K562 (cell line): ENCODE measurements at regions of chr9 and their contacts with region 1.

Region 1: DNA sequence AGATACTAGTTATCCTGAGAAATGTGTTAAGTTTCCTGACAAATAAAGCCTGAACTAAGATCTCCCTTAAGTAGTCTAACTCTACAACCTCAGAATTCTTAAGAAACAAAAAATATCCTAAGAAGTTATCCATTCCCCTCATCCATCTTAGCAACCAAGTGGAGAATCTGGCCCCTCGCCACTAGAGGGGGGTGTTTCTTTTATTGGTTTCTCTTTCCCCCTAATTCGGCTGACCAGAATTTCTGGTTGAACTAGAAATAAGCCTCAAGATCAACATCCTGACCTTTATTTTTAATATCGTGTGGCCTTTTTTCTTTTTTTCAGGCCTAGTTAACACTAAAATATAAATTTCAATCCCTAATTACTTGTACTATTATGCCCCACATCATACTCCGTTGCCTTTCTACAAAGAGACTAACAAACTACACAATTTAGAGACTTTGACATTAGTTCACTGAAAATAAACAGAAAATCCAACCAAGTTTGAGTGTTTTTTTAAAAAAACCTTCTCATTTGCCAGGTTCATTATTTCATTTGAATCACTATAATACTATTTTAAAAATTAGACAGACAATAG is 14.3 kb upstream of the NR4A3 start:
- DNase-seq: peak; percentile 67 to 79 (median 72)
- ATAC-seq: peak; percentile 92
- H3K4me3 ChIP-seq: no peak overlapping the region
- H3K27ac ChIP-seq: no peak overlapping the region
- H3K4me1 ChIP-seq: peaks cover 0 to 9% of the 10 kb centered on the region in 2 experiments; a peak in 2 of 5 replicates
- H3K27me3 ChIP-seq: no peaks in the 10 kb centered on the region
- CTCF ChIP-seq: peak; percentile 69 to 85 (median 78)
- EP300 ChIP-seq: no peak
- POLR2A ChIP-seq: no peak
- RAD21 ChIP-seq: peak; percentile 68 to 78

Region 2: DNA sequence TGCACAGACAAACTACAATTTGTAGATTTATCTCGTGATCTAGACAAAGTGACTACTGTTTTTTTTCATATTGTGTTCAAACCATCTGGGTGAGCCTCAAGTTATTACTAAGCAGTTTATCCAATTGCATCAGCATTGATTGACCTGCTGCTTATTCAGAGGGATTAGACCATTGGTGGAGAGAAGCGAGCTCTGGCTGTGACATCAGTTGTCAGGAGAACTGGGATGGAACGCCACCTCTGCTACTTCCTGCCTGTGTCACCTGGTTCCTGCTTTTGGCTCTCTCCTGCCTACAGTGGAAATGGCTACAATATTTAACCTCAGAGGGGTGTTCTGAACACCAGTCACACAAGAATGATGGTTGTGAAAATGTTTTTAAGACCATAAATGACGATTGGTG is 26.4 kb after region 1 on chr9:
- CTCF ChIA-PET with region 1: no interaction called
- POLR2A ChIA-PET with region 1: no interaction called
- in situ Hi-C with region 1: no loop called
- intact Hi-C with region 1: no loop called
- DNase-seq: no peak
- ATAC-seq: peak; percentile 74
- H3K4me3 ChIP-seq: no peak overlapping the region
- H3K27ac ChIP-seq: no peak overlapping the region
- H3K4me1 ChIP-seq: peaks cover 0 to 2% of the 10 kb centered on the region in 2 experiments; a peak in 1 of 5 replicates
- H3K27me3 ChIP-seq: peaks cover 11 to 12% of the 10 kb centered on the region in 2 experiments
- CTCF ChIP-seq: no peak
- EP300 ChIP-seq: no peak
- POLR2A ChIP-seq: no peak
- RAD21 ChIP-seq: no peak

Region 3: GRCh38 chr9:99999797-100000196 is 192.4 kb after region 1 on chr9:
- CTCF ChIA-PET with region 1: no interaction called
- POLR2A ChIA-PET with region 1: no interaction called
- in situ Hi-C with region 1: loop called (anchors 10 kb)
- intact Hi-C with region 1: no loop called
- DNase-seq: no peak
- ATAC-seq: no peak
- H3K4me3 ChIP-seq: no peak overlapping the region
- H3K27ac ChIP-seq: no peak overlapping the region
- H3K4me1 ChIP-seq: no peaks in the 10 kb centered on the region
- H3K27me3 ChIP-seq: no peaks in the 10 kb centered on the region
- CTCF ChIP-seq: no peak
- EP300 ChIP-seq: no peak
- POLR2A ChIP-seq: no peak
- RAD21 ChIP-seq: no peak

Region 4: GRCh38 chr9:100011062-100011681 is 203.8 kb after region 1 on chr9:
- CTCF ChIA-PET with region 1: interaction called, 18 read pairs
- POLR2A ChIA-PET with region 1: no interaction called
- in situ Hi-C with region 1: loop called (anchors 10 kb)
- intact Hi-C with region 1: loop called (anchors 1 kb)
- DNase-seq: peak; percentile 48 to 74 (median 59)
- ATAC-seq: peak; percentile 77; the same call in 2 of the 3 replicates
- H3K4me3 ChIP-seq: no peak overlapping the region
- H3K27ac ChIP-seq: no peak overlapping the region
- H3K4me1 ChIP-seq: no peaks in the 10 kb centered on the region
- H3K27me3 ChIP-seq: no peaks in the 10 kb centered on the region
- CTCF ChIP-seq: peak; percentile 49 to 79 (median 55); a peak in 5 of 6 replicates
- EP300 ChIP-seq: no peak
- POLR2A ChIP-seq: no peak
- RAD21 ChIP-seq: peak; percentile 83 to 90

Region 5: GRCh38 chr9:100222674-100223073 is 415.3 kb after region 1 on chr9:
- CTCF ChIA-PET with region 1: interaction called, 10 read pairs
- POLR2A ChIA-PET with region 1: no interaction called
- in situ Hi-C with region 1: loop called (anchors 5 kb)
- intact Hi-C with region 1: no loop called
- DNase-seq: peak in 2 of 4 experiments; percentile 12 to 28
- ATAC-seq: no peak
- H3K4me3 ChIP-seq: no peak overlapping the region
- H3K27ac ChIP-seq: no peak overlapping the region
- H3K4me1 ChIP-seq: 0 out of 5 replicates have a peak, but pooled peaks cover 0 to 3% of the 10 kb centered on the region in 2 experiments
- H3K27me3 ChIP-seq: no peaks in the 10 kb centered on the region
- CTCF ChIP-seq: peak in 2 of 3 experiments; percentile 13 to 52; a peak in 3 of 6 replicates
- EP300 ChIP-seq: no peak
- POLR2A ChIP-seq: no peak
- RAD21 ChIP-seq: peak; percentile 22 to 48